Mammary epithelial cell (primary cell): ENCODE measurements at regions of chr17 and their contacts with region 1.

Region 1: GRCh38 chr17:49968380-49969133 is 433 bp upstream of the DLX4 start:
- DNase-seq: peak; percentile 61
- H3K4me3 ChIP-seq: peak overlapping the region; percentile 13 to 49 (median 43)
- H3K27ac ChIP-seq: no peak overlapping the region
- H3K4me1 ChIP-seq: peaks cover 35% of the 10 kb centered on the region
- H3K27me3 ChIP-seq: peaks cover 71% of the 10 kb centered on the region
- CTCF ChIP-seq: no peak

Region 2: GRCh38 chr17:49987681-49988441 is 19.3 kb after region 1 on chr17:
- CTCF ChIA-PET with region 1: no interaction called
- dilution Hi-C with region 1: no loop called
- in situ Hi-C with region 1: no loop called
- intact Hi-C with region 1: loop called (anchors 2 kb)
- DNase-seq: peak; percentile 42
- H3K4me3 ChIP-seq: no peak overlapping the region
- H3K27ac ChIP-seq: no peak overlapping the region
- H3K4me1 ChIP-seq: peaks cover 13% of the 10 kb centered on the region
- H3K27me3 ChIP-seq: no peaks in the 10 kb centered on the region
- CTCF ChIP-seq: no peak

Region 3: GRCh38 chr17:50184611-50185398 is 216.2 kb after region 1 on chr17:
- CTCF ChIA-PET with region 1: no interaction called
- dilution Hi-C with region 1: no loop called
- in situ Hi-C with region 1: no loop called
- intact Hi-C with region 1: no loop called
- DNase-seq: peak; percentile 55
- H3K4me3 ChIP-seq: no peak overlapping the region
- H3K27ac ChIP-seq: no peak overlapping the region
- H3K4me1 ChIP-seq: peaks cover 12% of the 10 kb centered on the region
- H3K27me3 ChIP-seq: no peaks in the 10 kb centered on the region
- CTCF ChIP-seq: no peak